Activated CD4-positive, alpha-beta memory T cell treated with anti-CD3 and anti-CD28 coated beads, Interleukin-2, amount 10 ng/mL, durations not matched to agents 7 days and 5 days (primary cell): ENCODE measurements at regions of chr3 and their contacts with region 1.

Region 1: GRCh38 chr3:43345877-43346276 is 59.5 kb downstream of the SNRK start:
- DNase-seq: peak; percentile 45
- H3K4me3 Mint-ChIP-seq: no peak overlapping the region
- H3K27ac Mint-ChIP-seq: peak overlapping the region; percentile 89
- H3K4me1 Mint-ChIP-seq: peaks cover 68% of the 10 kb centered on the region
- H3K27me3 Mint-ChIP-seq: no peaks in the 10 kb centered on the region

Region 2: DNA sequence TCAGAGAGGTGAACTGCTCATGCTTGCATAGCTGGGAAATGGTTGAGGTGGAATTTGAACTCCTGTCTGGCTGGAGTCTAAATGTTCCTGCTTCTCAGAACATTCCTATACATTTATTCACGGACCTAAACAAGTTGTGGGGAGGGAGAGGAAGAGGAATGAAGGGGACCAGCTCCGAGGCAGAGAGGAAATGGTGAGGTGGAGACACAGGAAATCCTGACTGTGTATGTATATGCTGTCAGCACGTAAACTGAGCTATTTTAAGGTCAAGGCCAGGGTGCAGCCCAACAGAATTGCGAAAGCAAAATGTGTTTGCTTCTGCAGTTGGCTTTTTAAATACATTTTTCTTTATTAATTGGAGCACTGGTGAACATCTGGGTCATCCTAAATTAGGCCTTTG is 165.8 kb before region 1 on chr3:
- CTCF ChIA-PET with region 1: no interaction called
- POLR2A ChIA-PET with region 1: interaction called, 12 read pairs
- DNase-seq: peak; percentile 66
- H3K4me3 Mint-ChIP-seq: peak overlapping the region; percentile 48
- H3K27ac Mint-ChIP-seq: peak overlapping the region; percentile 93
- H3K4me1 Mint-ChIP-seq: peaks cover 48% of the 10 kb centered on the region
- H3K27me3 Mint-ChIP-seq: no peaks in the 10 kb centered on the region

Region 3: GRCh38 chr3:43296565-43296964 is 49.3 kb before region 1 on chr3:
- CTCF ChIA-PET with region 1: interaction called, 5 read pairs
- POLR2A ChIA-PET with region 1: interaction called, 43 read pairs
- DNase-seq: peak; percentile 69
- H3K4me3 Mint-ChIP-seq: peak overlapping the region; percentile 72
- H3K27ac Mint-ChIP-seq: peak overlapping the region; percentile 87
- H3K4me1 Mint-ChIP-seq: peaks cover 77% of the 10 kb centered on the region
- H3K27me3 Mint-ChIP-seq: no peaks in the 10 kb centered on the region

Region 4: GRCh38 chr3:43363621-43364266 is 17.9 kb after region 1 on chr3:
- CTCF ChIA-PET with region 1: no interaction called
- POLR2A ChIA-PET with region 1: no interaction called
- DNase-seq: no peak
- H3K4me3 Mint-ChIP-seq: no peak overlapping the region
- H3K27ac Mint-ChIP-seq: no peak overlapping the region
- H3K4me1 Mint-ChIP-seq: no peaks in the 10 kb centered on the region
- H3K27me3 Mint-ChIP-seq: no peaks in the 10 kb centered on the region

Region 5: GRCh38 chr3:43389388-43390254 is 43.7 kb after region 1 on chr3:
- CTCF ChIA-PET with region 1: no interaction called
- POLR2A ChIA-PET with region 1: interaction called, 21 read pairs
- DNase-seq: peak; percentile 85
- H3K4me3 Mint-ChIP-seq: peak overlapping the region; percentile 26
- H3K27ac Mint-ChIP-seq: peak overlapping the region; percentile 94
- H3K4me1 Mint-ChIP-seq: peaks cover 45% of the 10 kb centered on the region
- H3K27me3 Mint-ChIP-seq: peaks cover under 1% of the 10 kb centered on the region